A549 (cell line): ENCODE measurements at regions of chr16 and their contacts with region 1.

Region 1: DNA sequence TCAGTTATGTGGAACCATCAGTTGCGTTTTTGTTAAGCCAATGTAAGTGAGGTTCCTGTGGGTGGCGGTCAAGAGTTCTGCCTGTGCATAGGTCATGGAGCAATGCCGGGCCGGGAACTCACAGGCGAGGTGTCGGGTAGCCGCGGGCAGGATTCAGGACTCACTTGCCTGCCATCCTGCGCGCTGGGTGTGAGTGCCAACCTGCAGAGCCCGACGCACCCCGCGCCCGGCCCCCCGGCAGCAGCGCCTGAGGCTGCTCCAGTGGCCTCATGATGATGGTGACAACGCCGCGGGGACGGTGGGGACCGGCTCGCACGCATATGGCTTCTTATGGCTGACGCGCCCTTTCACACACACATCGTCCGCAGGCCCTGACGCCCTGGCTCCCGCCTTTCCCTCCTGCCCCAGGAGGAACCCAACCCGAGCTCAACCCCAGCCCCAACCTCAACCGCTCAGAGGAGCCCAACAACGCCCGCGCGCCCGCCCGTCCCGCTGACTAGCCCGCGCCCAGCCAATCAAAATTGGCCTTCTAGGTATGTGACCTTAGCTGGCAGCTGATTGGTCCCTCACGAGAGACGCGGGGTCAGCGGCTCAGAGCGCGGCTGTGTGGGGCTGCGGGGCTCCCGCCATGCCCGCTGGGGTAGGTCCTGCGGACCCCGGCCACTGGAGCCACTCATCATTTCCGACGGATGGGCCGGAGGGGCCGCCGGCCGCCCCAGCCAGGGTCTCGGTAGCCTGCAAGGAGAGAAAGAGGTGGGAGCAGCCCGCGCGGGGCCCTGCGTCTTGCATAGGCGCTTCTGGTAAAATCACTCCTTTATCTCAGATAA is at the start of gene C16orf95:
- DNase-seq: peak; percentile 95 to 99
- ATAC-seq: peak; percentile 96 to 98
- H3K4me3 ChIP-seq: peak within 1 kb of the TSS; percentile 69
- H3K27ac ChIP-seq: peak within 1 kb of the TSS; percentile 89 to 94
- H3K4me1 ChIP-seq: peaks cover 6% of the 10 kb centered on the region; the same call in 2 of the 3 replicates
- CTCF ChIP-seq: peak; percentile 52
- EP300 ChIP-seq: no peak
- POLR2A ChIP-seq: peak; percentile 75
- RAD21 ChIP-seq: peak; percentile 34 to 50
- polyA plus RNA-seq, gene C16orf95: 3.4 and 3.5 TPM in 2 replicates

Region 2: GRCh38 chr16:87305505-87306391 is 11.4 kb before region 1 on chr16:
- CTCF ChIA-PET with region 1: interaction called, 19 read pairs
- POLR2A ChIA-PET with region 1: no interaction called
- DNase-seq: no peak
- ATAC-seq: peak in 1 of 2 experiments; percentile 69; a peak in 3 of 6 replicates
- H3K4me3 ChIP-seq: no peak overlapping the region
- H3K27ac ChIP-seq: no peak overlapping the region
- H3K4me1 ChIP-seq: no peaks in the 10 kb centered on the region
- CTCF ChIP-seq: no peak
- EP300 ChIP-seq: no peak
- POLR2A ChIP-seq: no peak
- RAD21 ChIP-seq: no peak

Region 3: GRCh38 chr16:87332150-87332549 is 15.0 kb after region 1 on chr16:
- CTCF ChIA-PET with region 1: interaction called, 17 read pairs
- POLR2A ChIA-PET with region 1: interaction called, 5 read pairs
- DNase-seq: no peak
- ATAC-seq: no peak
- H3K4me3 ChIP-seq: no peak overlapping the region
- H3K27ac ChIP-seq: no peak overlapping the region
- H3K4me1 ChIP-seq: no peaks in the 10 kb centered on the region
- CTCF ChIP-seq: no peak
- EP300 ChIP-seq: no peak
- POLR2A ChIP-seq: no peak
- RAD21 ChIP-seq: no peak

Region 4: DNA sequence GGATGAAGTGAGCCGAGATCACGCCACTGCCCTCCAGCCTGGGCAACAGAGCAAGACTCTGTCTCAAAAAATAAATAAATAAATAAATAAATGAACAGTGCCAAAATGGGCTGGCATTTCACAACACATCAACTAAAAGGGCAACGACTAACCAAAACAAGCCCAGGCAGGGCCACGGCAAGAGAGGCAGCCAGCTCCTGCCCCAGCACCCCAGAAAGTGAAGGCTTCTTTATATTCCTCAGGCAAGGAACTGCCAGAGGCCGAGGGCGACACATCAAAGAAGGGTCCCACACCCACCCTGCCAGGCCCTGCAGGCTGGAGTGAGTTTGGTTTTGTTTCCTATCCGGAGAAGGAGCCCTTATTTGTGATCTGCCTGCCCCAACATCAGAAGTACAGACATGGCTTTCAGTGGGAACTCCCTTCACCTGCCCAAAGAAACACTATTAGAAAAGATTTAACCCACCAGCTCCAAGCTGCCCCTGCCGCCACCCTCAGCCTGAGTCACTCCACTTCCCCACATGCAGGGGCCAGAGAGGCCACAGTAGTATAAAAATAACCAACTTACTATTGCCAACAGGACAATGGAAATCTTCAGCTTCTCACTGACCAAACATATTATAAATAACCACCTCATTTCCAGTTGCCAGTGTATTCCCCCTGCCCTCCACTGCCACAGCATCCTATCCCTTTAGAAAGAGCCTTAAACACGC is 58.4 kb after region 1 on chr16:
- CTCF ChIA-PET with region 1: no interaction called
- POLR2A ChIA-PET with region 1: no interaction called
- DNase-seq: no peak
- ATAC-seq: no peak
- H3K4me3 ChIP-seq: no peak overlapping the region
- H3K27ac ChIP-seq: peak overlapping the region in 1 of 2 experiments; percentile 26; a peak in 1 of 6 replicates
- H3K4me1 ChIP-seq: peaks cover 20% of the 10 kb centered on the region
- CTCF ChIP-seq: no peak
- EP300 ChIP-seq: no peak
- POLR2A ChIP-seq: no peak
- RAD21 ChIP-seq: no peak

Region 5: GRCh38 chr16:87387942-87388817 is 71.0 kb after region 1 on chr16:
- CTCF ChIA-PET with region 1: interaction called, 8 read pairs
- POLR2A ChIA-PET with region 1: interaction called, 19 read pairs
- DNase-seq: peak; percentile 95 to 100
- ATAC-seq: peak; percentile 70 to 83
- H3K4me3 ChIP-seq: 0 out of 3 replicates have a peak overlapping the region, but pooled peaks have one; percentile 20
- H3K27ac ChIP-seq: peak overlapping the region; percentile 80 to 98
- H3K4me1 ChIP-seq: peaks cover 40% of the 10 kb centered on the region
- CTCF ChIP-seq: no peak
- EP300 ChIP-seq: peak; percentile 44 to 51; a peak in 2 of 5 replicates
- POLR2A ChIP-seq: no peak
- RAD21 ChIP-seq: no peak